Calu3 (cell line): ENCODE measurements at regions of chr6 and their contacts with region 1.

Region 1: GRCh38 chr6:151675746-151676416 is 131.6 kb upstream of the ESR1 start:
- DNase-seq: peak; percentile 64
- H3K4me3 Mint-ChIP-seq: no peak overlapping the region
- H3K27ac Mint-ChIP-seq: no peak overlapping the region
- H3K4me1 Mint-ChIP-seq: peaks cover 9% of the 10 kb centered on the region
- H3K27me3 Mint-ChIP-seq: no peaks in the 10 kb centered on the region
- CTCF ChIP-seq: peak; percentile 78

Region 2: GRCh38 chr6:151900730-151901433 is 225.0 kb after region 1 on chr6:
- CTCF ChIA-PET with region 1: no interaction called
- intact Hi-C with region 1: no loop called
- DNase-seq: peak; percentile 74
- H3K4me3 Mint-ChIP-seq: peak overlapping the region; percentile 24
- H3K27ac Mint-ChIP-seq: peak overlapping the region; percentile 88
- H3K4me1 Mint-ChIP-seq: peaks cover 32% of the 10 kb centered on the region
- H3K27me3 Mint-ChIP-seq: no peaks in the 10 kb centered on the region
- CTCF ChIP-seq: no peak

Region 3: DNA sequence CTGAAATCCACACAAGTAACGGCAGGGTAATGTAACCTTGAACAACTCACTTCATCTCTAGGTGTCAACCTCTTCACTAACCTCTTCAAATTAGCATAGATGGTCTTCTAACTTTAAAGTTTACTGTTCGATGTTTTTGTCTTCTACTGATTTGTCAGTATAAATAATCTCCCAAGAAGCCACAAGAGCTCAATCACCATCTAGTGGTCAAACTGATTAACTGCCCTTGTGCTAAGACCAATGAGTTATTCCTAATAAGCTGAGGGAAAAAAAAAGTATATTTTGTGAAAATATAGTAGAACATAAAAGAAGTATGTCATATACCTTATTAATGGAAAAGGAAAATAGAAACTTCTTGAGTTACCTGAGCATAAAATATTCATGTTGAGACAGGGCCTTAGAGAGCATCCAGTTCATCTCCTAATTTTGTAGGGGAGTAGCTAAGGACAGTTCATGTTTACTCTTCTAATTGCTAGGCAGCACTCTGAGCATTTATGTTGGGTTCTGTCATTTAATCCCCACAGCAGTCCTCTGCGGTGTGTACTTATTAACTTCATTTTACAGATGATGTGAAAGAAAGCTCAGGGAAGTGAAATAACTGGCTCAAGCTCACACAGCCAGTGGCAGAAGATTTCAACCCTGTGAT is 448.7 kb after region 1 on chr6:
- CTCF ChIA-PET with region 1: no interaction called
- intact Hi-C with region 1: loop called (anchors 2 kb)
- DNase-seq: no peak
- H3K4me3 Mint-ChIP-seq: no peak overlapping the region
- H3K27ac Mint-ChIP-seq: no peak overlapping the region
- H3K4me1 Mint-ChIP-seq: no peaks in the 10 kb centered on the region
- H3K27me3 Mint-ChIP-seq: no peaks in the 10 kb centered on the region
- CTCF ChIP-seq: no peak

Region 4: DNA sequence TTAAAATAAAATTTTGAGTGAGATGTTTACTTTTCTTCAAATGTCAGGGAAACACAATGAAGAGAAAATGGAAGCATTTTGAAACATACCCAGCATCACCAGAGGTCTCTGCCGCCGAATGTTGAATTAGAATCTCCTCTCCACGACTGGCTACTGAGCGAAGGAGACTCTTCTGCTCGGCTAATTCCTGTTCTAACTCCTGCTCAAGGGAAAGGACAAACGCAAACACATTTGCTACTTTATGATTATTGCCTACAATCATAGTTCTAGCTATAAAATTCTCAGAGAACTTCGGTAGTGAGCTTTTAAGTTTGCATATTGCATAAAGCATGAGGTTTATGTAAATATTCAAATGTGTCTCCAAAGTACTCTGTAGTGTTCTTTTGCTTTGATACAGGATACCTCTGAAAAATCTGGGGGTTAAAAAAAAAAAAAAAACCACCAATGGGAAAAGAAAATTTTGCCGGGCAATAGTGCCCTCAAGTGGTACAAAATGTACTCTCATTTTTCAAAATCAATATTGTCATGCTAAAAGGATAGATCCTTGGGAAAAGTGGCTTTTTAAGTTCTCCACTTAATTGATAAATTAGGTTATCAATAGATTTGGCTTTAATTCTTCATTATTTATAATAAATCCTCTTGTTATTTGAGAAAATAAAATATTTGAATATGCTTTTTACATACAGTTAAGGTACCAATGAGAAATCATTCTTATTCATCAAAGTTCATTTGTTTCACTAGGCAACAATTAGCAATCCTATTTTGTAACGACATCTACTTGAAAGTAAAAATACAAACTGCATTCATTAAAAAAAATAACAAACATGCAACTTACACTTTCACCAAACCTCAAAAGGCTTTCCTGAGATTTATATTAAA is 592.3 kb after region 1 on chr6:
- CTCF ChIA-PET with region 1: no interaction called
- intact Hi-C with region 1: loop called (anchors 2 kb)
- DNase-seq: peak; percentile 6
- H3K4me3 Mint-ChIP-seq: no peak overlapping the region
- H3K27ac Mint-ChIP-seq: no peak overlapping the region
- H3K4me1 Mint-ChIP-seq: no peaks in the 10 kb centered on the region
- H3K27me3 Mint-ChIP-seq: no peaks in the 10 kb centered on the region
- CTCF ChIP-seq: peak; percentile 42